Activated CD4-positive, alpha-beta memory T cell treated with anti-CD3 and anti-CD28 coated beads for 36 hours (primary cell): ENCODE measurements at regions of chr1 and their contacts with region 1.

Region 1: GRCh38 chr1:233598891-233599541 is 14.9 kb upstream of the KCNK1 start:
- DNase-seq: peak; percentile 75
- H3K4me3 Mint-ChIP-seq: peak overlapping the region; percentile 27
- H3K27ac Mint-ChIP-seq: peak overlapping the region; percentile 82
- H3K4me1 Mint-ChIP-seq: peaks cover 41% of the 10 kb centered on the region
- H3K27me3 Mint-ChIP-seq: peaks cover 9% of the 10 kb centered on the region

Region 2: GRCh38 chr1:233496993-233497392 is 102.0 kb before region 1 on chr1:
- CTCF ChIA-PET with region 1: no interaction called
- POLR2A ChIA-PET with region 1: no interaction called
- intact Hi-C with region 1: loop called (anchors 1 kb)
- DNase-seq: no peak
- H3K4me3 Mint-ChIP-seq: no peak overlapping the region
- H3K27ac Mint-ChIP-seq: no peak overlapping the region
- H3K4me1 Mint-ChIP-seq: no peaks in the 10 kb centered on the region
- H3K27me3 Mint-ChIP-seq: peaks cover 16% of the 10 kb centered on the region

Region 3: GRCh38 chr1:233627376-233627775 is 28.4 kb after region 1 on chr1:
- CTCF ChIA-PET with region 1: interaction called, 3 read pairs
- POLR2A ChIA-PET with region 1: interaction called, 3 read pairs
- intact Hi-C with region 1: loop called (anchors 1 kb)
- DNase-seq: peak; percentile 80
- H3K4me3 Mint-ChIP-seq: no peak overlapping the region
- H3K27ac Mint-ChIP-seq: peak overlapping the region; percentile 81
- H3K4me1 Mint-ChIP-seq: peaks cover 12% of the 10 kb centered on the region
- H3K27me3 Mint-ChIP-seq: peaks cover 8% of the 10 kb centered on the region

Region 4: DNA sequence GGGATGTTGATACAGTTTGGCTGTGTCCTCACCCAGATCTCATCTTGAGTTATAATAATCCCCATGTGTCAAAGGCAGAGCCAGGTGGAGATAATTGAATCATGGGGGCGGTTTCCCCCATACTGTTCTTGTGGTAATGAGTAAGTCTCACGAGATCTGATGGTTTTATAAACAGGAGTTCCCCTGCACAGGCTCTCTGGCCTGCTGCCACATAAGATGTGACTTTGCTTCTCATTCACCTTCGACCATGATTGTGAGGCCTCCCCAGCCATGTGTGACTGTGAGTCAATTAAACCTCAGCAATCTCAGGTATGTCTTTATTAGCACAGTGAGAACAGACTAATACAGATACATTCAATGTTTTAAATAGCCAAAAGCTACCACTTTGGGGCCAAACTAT is 346.6 kb after region 1 on chr1:
- CTCF ChIA-PET with region 1: no interaction called
- POLR2A ChIA-PET with region 1: no interaction called
- intact Hi-C with region 1: no loop called
- DNase-seq: peak; percentile 9
- H3K4me3 Mint-ChIP-seq: no peak overlapping the region
- H3K27ac Mint-ChIP-seq: no peak overlapping the region
- H3K4me1 Mint-ChIP-seq: no peaks in the 10 kb centered on the region
- H3K27me3 Mint-ChIP-seq: peaks cover 5% of the 10 kb centered on the region

Region 5: DNA sequence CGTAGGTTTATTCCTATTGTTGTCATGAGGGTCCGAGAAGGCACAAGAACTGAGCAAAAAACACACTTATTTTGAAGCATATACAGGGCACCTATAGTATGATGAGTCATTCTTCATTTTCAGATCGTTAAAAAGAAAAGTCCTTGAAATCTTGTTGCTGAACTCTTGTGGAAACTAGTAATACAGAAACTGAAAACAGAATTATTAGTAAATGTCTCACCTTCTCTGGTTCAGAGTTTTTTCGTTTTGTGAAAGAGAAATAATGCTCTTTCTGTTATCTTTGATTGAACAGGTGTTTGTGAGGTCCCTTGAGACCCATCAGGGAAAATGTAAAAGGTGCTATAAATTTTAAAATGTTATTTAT is 672.2 kb after region 1 on chr1:
- CTCF ChIA-PET with region 1: no interaction called
- POLR2A ChIA-PET with region 1: no interaction called
- intact Hi-C with region 1: loop called (anchors 5 kb)
- DNase-seq: no peak
- H3K4me3 Mint-ChIP-seq: no peak overlapping the region
- H3K27ac Mint-ChIP-seq: no peak overlapping the region
- H3K4me1 Mint-ChIP-seq: peaks cover 32% of the 10 kb centered on the region
- H3K27me3 Mint-ChIP-seq: peaks cover 30% of the 10 kb centered on the region